Vagina (tissue), 2 donors: ENCODE measurements at regions of chr12 and their contacts with region 1.

Region 1: DNA sequence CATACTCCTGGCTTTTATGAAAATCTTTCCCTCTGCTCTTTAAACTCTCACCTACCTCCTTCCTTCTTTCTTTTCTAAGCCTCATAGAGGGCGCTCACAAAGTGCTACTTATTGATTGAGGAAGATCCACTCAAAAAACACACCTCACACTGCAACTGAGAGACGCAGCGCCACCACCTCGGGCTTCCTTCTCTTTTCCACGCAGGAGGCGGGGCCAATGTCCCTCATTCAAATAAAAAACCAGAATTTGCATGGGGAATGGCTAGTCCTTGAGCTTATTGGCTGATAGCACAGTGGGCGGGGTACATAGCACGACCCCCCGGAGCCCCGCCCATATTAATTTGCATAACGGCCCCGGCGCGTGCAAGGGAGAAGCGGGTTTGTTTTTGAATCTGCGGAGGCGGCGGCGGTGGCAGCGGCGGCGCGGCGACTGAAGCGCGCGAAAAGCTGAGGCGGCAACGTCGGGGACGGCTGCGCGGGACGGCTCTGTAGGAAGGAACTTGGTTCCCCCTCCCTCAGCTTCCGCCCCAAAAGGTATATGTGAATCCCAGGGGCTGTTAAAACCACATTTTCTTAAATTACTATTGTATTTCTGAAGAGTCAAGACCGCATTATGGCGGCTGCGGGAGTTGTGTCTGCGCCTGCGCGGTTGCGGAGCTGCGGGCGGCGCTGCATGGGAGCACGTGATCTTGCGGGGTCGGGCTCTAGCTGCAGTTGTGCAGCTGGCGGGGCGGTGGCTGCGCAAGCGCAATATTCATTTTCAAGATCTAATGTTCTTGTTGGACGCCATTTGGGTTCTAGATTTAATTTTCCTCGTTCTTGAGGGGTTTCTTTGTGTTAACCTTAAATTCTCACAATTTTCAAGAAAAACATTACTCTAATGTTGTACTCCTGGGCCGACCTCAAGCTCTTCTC is at the start of gene ATF7IP:
- DNase-seq: peak; percentile 98 to 99
- H3K4me3 ChIP-seq: peak within 1 kb of the TSS; percentile 62 to 70
- H3K27ac ChIP-seq: peak within 1 kb of the TSS; percentile 94
- H3K4me1 ChIP-seq: peaks cover 15% of the 10 kb centered on the region
- H3K27me3 ChIP-seq: no peaks in the 10 kb centered on the region
- CTCF ChIP-seq: no peak
- POLR2A ChIP-seq: peak in 1 of 2 donors; percentile 80
- total RNA-seq, gene ATF7IP: 46.4 TPM

Region 2: DNA sequence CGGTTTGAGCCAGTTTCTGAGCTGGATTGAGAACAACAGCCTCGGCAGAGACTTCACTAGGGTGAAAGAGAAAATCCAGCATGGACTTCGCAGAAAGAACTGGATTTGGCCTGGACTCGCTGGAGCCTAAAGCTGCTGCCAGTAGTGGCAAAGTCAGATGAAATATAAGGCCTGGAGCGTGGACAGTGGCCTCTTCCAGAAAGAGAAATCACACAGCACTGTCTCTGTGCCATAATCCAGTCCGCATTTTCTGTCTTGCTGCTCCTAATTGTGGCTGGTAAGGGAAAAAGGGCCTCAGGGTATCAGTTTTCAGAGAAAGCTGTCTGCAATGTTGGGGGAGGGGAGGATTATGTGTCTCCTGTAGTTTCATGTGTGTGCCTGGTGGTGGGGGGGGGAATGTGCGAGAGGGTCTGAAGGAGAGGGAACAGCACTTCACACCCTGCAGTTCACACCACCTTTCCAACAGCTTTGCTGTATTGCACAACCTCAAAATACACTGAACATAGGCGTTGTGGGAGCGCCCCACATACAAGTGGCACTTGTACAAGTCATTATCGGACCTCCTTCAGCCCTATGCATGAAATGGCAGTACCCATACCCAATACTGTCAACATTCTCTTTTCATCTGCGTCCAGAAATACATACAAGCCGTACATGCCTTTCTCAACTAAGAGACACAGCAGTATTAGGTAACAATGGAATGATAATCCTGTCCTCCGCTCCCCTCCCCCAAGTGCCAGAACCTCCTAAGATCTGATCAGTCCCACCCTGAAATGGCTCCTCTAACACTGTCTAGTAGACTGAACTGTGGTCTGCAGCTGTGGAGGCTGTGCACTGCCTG is 107.6 kb before region 1 on chr12:
- intact Hi-C with region 1: loop called (anchors 5 kb)
- DNase-seq: peak in 1 of 2 donors; percentile 97
- H3K4me3 ChIP-seq: peak overlapping the region; percentile 6 to 15
- H3K27ac ChIP-seq: peak overlapping the region; percentile 88
- H3K4me1 ChIP-seq: peaks cover 57% of the 10 kb centered on the region
- H3K27me3 ChIP-seq: no peaks in the 10 kb centered on the region
- CTCF ChIP-seq: peak in 2 of 3 experiments; percentile 6 to 54
- POLR2A ChIP-seq: peak in 1 of 2 donors; percentile 82

Region 3: GRCh38 chr12:14741153-14741552 is 375.6 kb after region 1 on chr12:
- intact Hi-C with region 1: no loop called
- DNase-seq: no peak
- H3K4me3 ChIP-seq: no peak overlapping the region
- H3K27ac ChIP-seq: no peak overlapping the region
- H3K4me1 ChIP-seq: no peaks in the 10 kb centered on the region
- H3K27me3 ChIP-seq: no peaks in the 10 kb centered on the region
- CTCF ChIP-seq: no peak
- POLR2A ChIP-seq: no peak